Right cardiac atrium (tissue), 5 donors: ENCODE measurements at regions of chr13 and their contacts with region 1.

Region 1: GRCh38 chr13:20197361-20197834 is 4.7 kb upstream of the GJB2 start:
- DNase-seq: no peak
- ATAC-seq: peak in 1 of 2 donors; percentile 41
- H3K4me3 ChIP-seq: no peak overlapping the region
- H3K27ac ChIP-seq: no peak overlapping the region
- H3K4me1 ChIP-seq: no peaks in the 10 kb centered on the region
- H3K27me3 ChIP-seq: no peaks in the 10 kb centered on the region

Region 2: GRCh38 chr13:20489185-20489820 is 291.9 kb after region 1 on chr13:
- intact Hi-C with region 1: loop called in 3 of 4 experiments (anchors 5 to 10 kb)
- DNase-seq: no peak
- ATAC-seq: peak; percentile 55 to 64
- H3K4me3 ChIP-seq: no peak overlapping the region
- H3K27ac ChIP-seq: no peak overlapping the region
- H3K4me1 ChIP-seq: no peaks in the 10 kb centered on the region
- H3K27me3 ChIP-seq: no peaks in the 10 kb centered on the region